CD4-positive, alpha-beta T cell (primary cell): ENCODE measurements at regions of chr6 and their contacts with region 1.

Region 1: DNA sequence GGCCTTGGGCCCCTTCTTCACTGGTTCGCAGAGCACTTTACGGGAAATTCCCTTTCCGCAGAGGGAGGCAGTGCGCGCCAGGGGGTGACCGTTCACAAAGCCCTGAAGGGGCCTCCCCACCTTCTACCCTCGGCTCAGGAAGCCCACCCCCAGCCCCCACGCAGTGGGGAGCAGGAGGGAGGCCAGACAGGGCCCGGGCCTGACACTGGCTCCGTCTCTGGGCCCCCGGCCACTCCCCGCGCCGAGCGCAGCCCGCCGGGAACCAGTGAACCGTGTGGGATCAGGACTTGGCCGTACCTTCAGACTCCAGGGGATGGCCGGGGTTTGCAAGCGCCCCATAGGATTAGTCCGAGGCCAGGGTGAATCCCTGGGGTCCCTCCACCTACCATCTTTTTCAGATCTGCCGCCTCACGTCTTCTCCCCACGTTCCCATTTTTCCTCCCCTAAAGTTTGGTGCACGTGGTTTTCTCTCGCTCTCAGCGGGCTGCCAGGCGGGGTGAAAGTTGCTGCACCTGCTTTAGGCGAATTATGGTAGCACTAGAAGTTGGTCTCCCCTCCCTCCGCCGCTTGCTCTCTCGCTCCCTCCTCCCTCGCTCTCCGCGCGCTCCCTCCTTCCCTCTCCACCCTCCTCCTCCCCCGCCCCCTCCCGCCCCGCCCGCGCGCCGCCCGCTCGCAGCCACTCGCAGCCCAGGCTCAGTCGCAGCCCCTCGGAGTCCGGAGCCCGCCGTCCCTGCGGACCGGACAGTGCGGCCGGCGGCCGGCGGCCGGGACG is at the start of gene FOXP4:
- DNase-seq: peak; percentile 69 to 93 (median 79)
- ATAC-seq: peak; percentile 87
- H3K4me3 ChIP-seq: peak within 1 kb of the TSS; percentile 69
- H3K4me3 Mint-ChIP-seq: peak within 1 kb of the TSS; percentile 93
- H3K27ac ChIP-seq: no peak within 1 kb of the TSS
- H3K27ac Mint-ChIP-seq: peak within 1 kb of the TSS; percentile 28
- H3K4me1 ChIP-seq: peaks cover 38% of the 10 kb centered on the region
- H3K4me1 Mint-ChIP-seq: peaks cover 30% of the 10 kb centered on the region
- H3K27me3 ChIP-seq: peaks cover 17 to 24% of the 10 kb centered on the region in 2 experiments
- H3K27me3 Mint-ChIP-seq: peaks cover 17% of the 10 kb centered on the region
- CTCF ChIP-seq: no peak
- total RNA-seq, gene FOXP4: 3.7 to 3.9 TPM

Region 2: DNA sequence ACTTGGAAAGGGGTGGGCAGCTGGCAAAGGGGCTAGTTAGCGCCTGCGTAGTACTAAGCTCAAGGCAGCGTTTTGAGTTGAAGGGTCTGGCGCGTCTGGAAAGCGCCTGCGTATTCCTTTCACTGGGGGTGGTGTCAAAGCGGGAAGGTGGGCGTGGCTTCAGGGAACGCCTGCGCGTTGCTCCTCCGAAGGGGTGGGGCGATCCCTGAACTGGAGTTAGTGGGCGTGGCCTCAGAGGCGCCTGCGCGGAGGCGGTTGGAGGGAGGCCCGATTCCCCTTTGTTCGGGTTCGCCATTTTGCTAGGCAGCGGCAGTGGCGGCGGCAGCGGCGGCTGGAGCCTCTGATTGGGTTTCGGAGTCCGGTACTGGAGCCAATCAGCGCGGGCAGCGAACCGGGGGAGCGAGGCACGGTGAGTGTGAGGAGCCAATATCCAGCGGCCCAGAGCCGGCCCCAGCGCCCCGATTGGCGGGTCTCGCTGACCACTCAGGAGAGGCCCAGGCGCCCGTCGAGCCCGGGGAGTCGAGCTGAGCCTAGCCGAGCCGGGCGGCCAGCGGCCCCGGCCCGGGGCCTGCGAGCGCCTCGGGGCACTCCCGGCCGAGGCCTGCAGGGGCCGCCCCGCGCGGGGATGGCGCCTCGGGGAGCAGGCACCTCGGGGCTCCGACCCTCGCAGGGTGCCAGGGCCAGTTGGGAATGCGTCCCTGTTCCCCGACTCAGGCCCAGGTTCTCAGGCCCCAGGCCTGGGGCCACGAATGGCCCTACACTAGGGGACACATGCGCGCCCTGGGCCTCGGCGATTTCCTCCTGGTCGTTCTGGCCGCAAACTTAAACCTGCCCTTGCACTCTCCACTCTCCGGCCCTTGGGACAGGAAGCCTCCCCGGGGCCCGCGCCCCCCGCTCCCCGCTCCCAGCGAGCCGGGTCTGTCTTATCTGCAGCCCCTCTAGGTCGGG is 472.9 kb before region 1 on chr6 and contains the start of gene NFYA:
- CTCF ChIA-PET with region 1: no interaction called
- POLR2A ChIA-PET with region 1: no interaction called
- intact Hi-C with region 1: loop called in 1 of 2 experiments (anchors 5 kb)
- DNase-seq: peak in 13 of 14 experiments; percentile 100
- ATAC-seq: peak; percentile 62
- H3K4me3 ChIP-seq: peak within 1 kb of the TSS; percentile 70
- H3K4me3 Mint-ChIP-seq: peak within 1 kb of the TSS; percentile 93
- H3K27ac ChIP-seq: peak within 1 kb of the TSS; percentile 95 to 96
- H3K27ac Mint-ChIP-seq: peak within 1 kb of the TSS; percentile 88
- H3K4me1 ChIP-seq: peaks cover 23% of the 10 kb centered on the region
- H3K4me1 Mint-ChIP-seq: peaks cover 51% of the 10 kb centered on the region
- H3K27me3 ChIP-seq: no peaks in the 10 kb centered on the region
- H3K27me3 Mint-ChIP-seq: no peaks in the 10 kb centered on the region
- CTCF ChIP-seq: peak; percentile 33
- total RNA-seq, gene NFYA: 26.7 to 27.3 TPM

Region 3: GRCh38 chr6:41424370-41425058 is 121.4 kb before region 1 on chr6:
- CTCF ChIA-PET with region 1: no interaction called
- POLR2A ChIA-PET with region 1: no interaction called
- intact Hi-C with region 1: loop called (anchors 1 kb)
- DNase-seq: peak; percentile 57 to 88 (median 78)
- ATAC-seq: peak; percentile 63
- H3K4me3 ChIP-seq: no peak overlapping the region
- H3K4me3 Mint-ChIP-seq: no peak overlapping the region
- H3K27ac ChIP-seq: no peak overlapping the region
- H3K27ac Mint-ChIP-seq: no peak overlapping the region
- H3K4me1 ChIP-seq: peaks cover 37% of the 10 kb centered on the region
- H3K4me1 Mint-ChIP-seq: peaks cover 8% of the 10 kb centered on the region
- H3K27me3 ChIP-seq: peaks cover 20 to 34% of the 10 kb centered on the region in 2 experiments
- H3K27me3 Mint-ChIP-seq: peaks cover 27% of the 10 kb centered on the region
- CTCF ChIP-seq: peak; percentile 87

Region 4: GRCh38 chr6:41560431-41561192 is 14.7 kb after region 1 on chr6:
- CTCF ChIA-PET with region 1: interaction called, 4 read pairs
- POLR2A ChIA-PET with region 1: interaction called, 12 read pairs
- intact Hi-C with region 1: loop called in 1 of 2 experiments (anchors 1 kb)
- DNase-seq: peak; percentile 63 to 98 (median 82)
- ATAC-seq: peak; percentile 90
- H3K4me3 ChIP-seq: peak overlapping the region; percentile 63
- H3K4me3 Mint-ChIP-seq: peak overlapping the region; percentile 93
- H3K27ac ChIP-seq: peak overlapping the region in 1 of 2 donors; percentile 9
- H3K27ac Mint-ChIP-seq: peak overlapping the region; percentile 86
- H3K4me1 ChIP-seq: peaks cover 29% of the 10 kb centered on the region
- H3K4me1 Mint-ChIP-seq: peaks cover 23% of the 10 kb centered on the region
- H3K27me3 ChIP-seq: no peaks in the 10 kb centered on the region
- H3K27me3 Mint-ChIP-seq: no peaks in the 10 kb centered on the region
- CTCF ChIP-seq: no peak

Region 5: GRCh38 chr6:41591859-41592502 is 46.1 kb after region 1 on chr6:
- CTCF ChIA-PET with region 1: no interaction called
- POLR2A ChIA-PET with region 1: no interaction called
- intact Hi-C with region 1: loop called in 1 of 2 experiments (anchors 5 kb)
- DNase-seq: peak; percentile 67 to 84 (median 76)
- ATAC-seq: peak; percentile 83
- H3K4me3 ChIP-seq: no peak overlapping the region
- H3K4me3 Mint-ChIP-seq: no peak overlapping the region
- H3K27ac ChIP-seq: no peak overlapping the region
- H3K27ac Mint-ChIP-seq: no peak overlapping the region
- H3K4me1 ChIP-seq: peaks cover 5% of the 10 kb centered on the region
- H3K4me1 Mint-ChIP-seq: no peaks in the 10 kb centered on the region
- H3K27me3 ChIP-seq: no peaks in the 10 kb centered on the region
- H3K27me3 Mint-ChIP-seq: no peaks in the 10 kb centered on the region
- CTCF ChIP-seq: peak; percentile 86